ENCODE measurements at regions of chr12 and their contacts with region 1.

Region 1: GRCh38 chr12:546921-547845 is 87.4 kb downstream of the B4GALNT3 start:
- DNase-seq: peak in 6 of 7 donors; percentile 49 to 77 (median 66)
- H3K4me3 ChIP-seq: no peak overlapping the region
- H3K27ac ChIP-seq: no peak overlapping the region
- H3K4me1 ChIP-seq: peaks cover 0 to 11% of the 10 kb centered on the region in 2 donors
- H3K27me3 ChIP-seq: no peaks in the 10 kb centered on the region
- CTCF ChIP-seq: peak; percentile 98 to 99 (median 99)
- POLR2A ChIP-seq: no peak

Region 2: DNA sequence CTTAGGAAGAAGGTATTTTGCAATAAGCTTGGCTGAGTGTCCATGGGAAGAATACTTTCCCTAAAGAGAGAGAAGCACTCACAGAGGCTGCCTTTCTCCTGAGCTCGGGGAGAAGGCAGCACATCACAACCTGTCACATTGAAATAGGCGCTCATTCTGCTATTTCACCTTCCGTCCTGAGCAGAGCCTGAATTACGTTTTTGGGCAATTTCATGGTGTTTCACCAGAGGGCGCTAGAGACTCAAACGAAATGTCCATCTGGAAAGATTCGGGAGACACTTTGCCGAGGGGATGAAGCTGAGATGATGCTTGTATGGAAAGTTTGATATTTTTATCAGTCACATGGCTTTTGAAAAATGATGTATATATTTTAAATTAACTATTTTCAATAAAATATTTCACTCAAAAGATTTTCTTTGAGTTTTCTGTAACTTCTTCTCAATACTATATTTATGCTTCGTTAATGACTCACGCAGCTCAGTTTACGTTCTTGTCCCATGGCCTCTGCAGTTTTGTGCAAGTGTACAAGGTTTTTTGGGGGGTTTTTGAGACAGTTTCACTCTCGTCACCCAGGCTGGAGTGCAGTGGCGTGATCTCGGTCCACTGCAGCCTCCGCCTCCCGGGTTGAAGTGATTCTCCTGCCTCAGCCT is 104.8 kb before region 1 on chr12:
- intact Hi-C with region 1: loop called in 1 of 2 experiments (anchors 5 kb)
- DNase-seq: peak; percentile 40 to 86 (median 62)
- H3K4me3 ChIP-seq: no peak overlapping the region
- H3K27ac ChIP-seq: no peak overlapping the region
- H3K4me1 ChIP-seq: no peaks in the 10 kb centered on the region
- H3K27me3 ChIP-seq: no peaks in the 10 kb centered on the region
- CTCF ChIP-seq: peak; percentile 75 to 81 (median 78)
- POLR2A ChIP-seq: no peak

Region 3: GRCh38 chr12:449203-449602 is 98.0 kb before region 1 on chr12:
- intact Hi-C with region 1: loop called (anchors 2 to 5 kb)
- DNase-seq: no peak
- H3K4me3 ChIP-seq: no peak overlapping the region
- H3K27ac ChIP-seq: no peak overlapping the region
- H3K4me1 ChIP-seq: no peaks in the 10 kb centered on the region
- H3K27me3 ChIP-seq: no peaks in the 10 kb centered on the region
- CTCF ChIP-seq: no peak
- POLR2A ChIP-seq: no peak

Region 4: GRCh38 chr12:968545-968944 is 421.4 kb after region 1 on chr12:
- intact Hi-C with region 1: no loop called
- DNase-seq: no peak
- H3K4me3 ChIP-seq: no peak overlapping the region
- H3K27ac ChIP-seq: no peak overlapping the region
- H3K4me1 ChIP-seq: no peaks in the 10 kb centered on the region
- H3K27me3 ChIP-seq: no peaks in the 10 kb centered on the region
- CTCF ChIP-seq: no peak
- POLR2A ChIP-seq: no peak